ENCODE measurements at regions of chr15 and their contacts with region 1.

Region 1: GRCh38 chr15:72375847-72376581 is at the start of gene HEXA:
- DNase-seq: peak; percentile 94
- H3K4me3 Mint-ChIP-seq: peak within 1 kb of the TSS; percentile 89
- H3K27ac Mint-ChIP-seq: peak within 1 kb of the TSS; percentile 93
- H3K4me1 Mint-ChIP-seq: peaks cover 31% of the 10 kb centered on the region
- H3K27me3 Mint-ChIP-seq: peaks cover 4% of the 10 kb centered on the region
- total RNA-seq, gene HEXA: 55.7 and 61.0 TPM in 2 replicates

Region 2: DNA sequence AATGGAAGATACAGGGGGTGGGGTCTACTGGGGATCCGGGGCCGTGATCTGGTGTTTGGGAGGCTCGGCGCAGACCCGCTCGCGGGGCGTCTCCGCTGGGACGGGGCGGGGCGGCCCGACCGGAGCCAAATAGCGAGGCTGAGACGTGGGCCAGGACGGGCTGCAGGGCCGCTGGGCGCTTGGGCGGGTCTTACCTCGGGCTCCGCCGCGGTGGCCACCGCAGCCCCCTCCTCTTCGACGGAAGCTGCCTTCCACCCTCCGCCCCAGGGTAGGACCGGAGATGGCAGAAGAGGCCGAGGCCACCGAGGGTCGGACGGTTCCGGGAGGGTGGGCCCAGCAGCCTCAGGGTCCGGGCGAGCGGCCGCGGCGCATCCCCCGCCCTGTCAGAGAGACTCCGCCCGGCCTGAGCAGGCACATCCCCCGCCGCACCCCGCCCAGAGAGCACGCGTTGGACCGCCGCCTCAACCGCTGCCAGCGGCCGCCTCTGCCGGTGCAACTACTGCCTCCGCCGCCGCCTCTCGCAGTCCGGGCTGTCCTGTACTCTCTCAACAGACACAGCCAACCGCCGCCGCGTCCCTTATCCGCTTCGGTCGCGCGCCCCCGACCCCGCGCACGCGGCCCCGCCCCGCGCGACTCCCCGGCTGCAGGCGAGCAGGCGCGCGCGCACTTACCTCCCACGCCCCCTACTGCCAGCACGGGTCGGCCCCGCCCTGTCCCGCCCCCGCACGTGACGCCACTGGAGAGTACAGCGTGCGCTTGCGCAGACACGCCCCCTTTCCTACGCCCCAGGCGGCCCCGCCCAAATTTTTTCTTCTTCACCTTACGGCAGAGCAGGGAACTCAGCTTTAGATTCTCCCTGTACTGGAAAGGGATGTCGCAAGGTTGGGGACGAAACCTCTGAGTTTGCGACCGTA is 258.3 kb before region 1 on chr15 and contains the start of gene MYO9A:
- intact Hi-C with region 1: loop called (anchors 1 kb)
- DNase-seq: peak; percentile 95
- H3K4me3 Mint-ChIP-seq: peak within 1 kb of the TSS; percentile 93
- H3K27ac Mint-ChIP-seq: peak within 1 kb of the TSS; percentile 95
- H3K4me1 Mint-ChIP-seq: peaks cover 23% of the 10 kb centered on the region
- H3K27me3 Mint-ChIP-seq: peaks cover 16% of the 10 kb centered on the region
- total RNA-seq, gene MYO9A: 15.2 and 16.4 TPM in 2 replicates

Region 3: GRCh38 chr15:72272213-72273002 is 103.6 kb before region 1 on chr15 and contains the start of gene PARP6:
- intact Hi-C with region 1: loop called (anchors 1 kb)
- DNase-seq: peak; percentile 99
- H3K4me3 Mint-ChIP-seq: peak within 1 kb of the TSS; percentile 95
- H3K27ac Mint-ChIP-seq: peak within 1 kb of the TSS; percentile 90
- H3K4me1 Mint-ChIP-seq: peaks cover 43% of the 10 kb centered on the region
- H3K27me3 Mint-ChIP-seq: peaks cover 3% of the 10 kb centered on the region
- total RNA-seq, gene PARP6: 79.3 and 87.1 TPM in 2 replicates

Region 4: DNA sequence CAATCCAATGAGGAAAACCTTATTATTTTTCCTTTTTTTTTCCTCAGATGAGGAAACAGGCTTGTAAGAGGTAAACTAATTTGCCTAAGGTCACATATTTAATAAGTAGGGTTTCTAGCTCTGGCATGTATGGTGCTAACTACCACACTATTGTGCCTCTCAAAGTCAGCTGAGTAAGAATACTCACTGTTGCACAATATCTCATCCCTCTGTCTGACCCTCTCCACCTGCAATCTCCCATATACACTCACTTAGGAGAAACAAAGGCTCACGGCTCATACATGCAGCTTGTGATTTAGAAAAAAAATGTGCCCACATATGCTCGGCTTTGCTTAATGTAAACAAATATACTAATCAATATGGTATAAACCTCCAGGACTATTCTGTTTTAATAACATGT is 87.7 kb after region 1 on chr15:
- intact Hi-C with region 1: loop called (anchors 2 kb)
- DNase-seq: no peak
- H3K4me3 Mint-ChIP-seq: no peak overlapping the region
- H3K27ac Mint-ChIP-seq: no peak overlapping the region
- H3K4me1 Mint-ChIP-seq: peaks cover 10% of the 10 kb centered on the region
- H3K27me3 Mint-ChIP-seq: peaks cover 4% of the 10 kb centered on the region

Region 5: GRCh38 chr15:74108111-74108510 is 1732.1 kb after region 1 on chr15:
- intact Hi-C with region 1: loop called (anchors 10 kb)
- DNase-seq: no peak
- H3K4me3 Mint-ChIP-seq: no peak overlapping the region
- H3K27ac Mint-ChIP-seq: no peak overlapping the region
- H3K4me1 Mint-ChIP-seq: no peaks in the 10 kb centered on the region
- H3K27me3 Mint-ChIP-seq: peaks cover 3% of the 10 kb centered on the region

Measured in activated T-helper 1 cell treated with anti-CD3 and anti-CD28 coated beads, Interleukin-12 subunit alpha, Interleukin-12 subunit beta, Interleukin-2, Interleukin-4 antibody, amounts not matched to agents 30 ng/mL and 10 ng/mL and 1 ng/mL, durations not matched to agents 14 hours and 24 hours and 36 hours (primary cell).